ENCODE measurements at regions of chr4 and their contacts with region 1.

Region 1: GRCh38 chr4:25043548-25043947 is 12.8 kb upstream of the LGI2 start:
- H3K4me3 ChIP-seq: no peak overlapping the region
- H3K27ac ChIP-seq: no peak overlapping the region
- H3K4me1 ChIP-seq: no peaks in the 10 kb centered on the region
- CTCF ChIP-seq: no peak

Region 2: GRCh38 chr4:24980064-24980690 is 63.4 kb before region 1 on chr4:
- CTCF ChIA-PET with region 1: interaction called, 10 read pairs
- POLR2A ChIA-PET with region 1: no interaction called
- H3K4me3 ChIP-seq: no peak overlapping the region
- H3K27ac ChIP-seq: no peak overlapping the region
- H3K4me1 ChIP-seq: no peaks in the 10 kb centered on the region
- CTCF ChIP-seq: peak; percentile 42; the same call in 1 of the 2 replicates